ENCODE measurements at regions of chr2 and their contacts with region 1.

Region 1: GRCh38 chr2:190648289-190649034 is 421 bp upstream of the NAB1 start:
- DNase-seq: peak; percentile 94 to 96
- ATAC-seq: peak; percentile 94
- H3K4me3 ChIP-seq: peak overlapping the region; percentile 67 to 73
- H3K27ac ChIP-seq: peak overlapping the region; percentile 52 to 85
- H3K4me1 ChIP-seq: peaks cover 0 to under 1% of the 10 kb centered on the region in 2 donors
- H3K27me3 ChIP-seq: no peaks in the 10 kb centered on the region

Region 2: GRCh38 chr2:190534310-190535120 is 113.9 kb before region 1 on chr2 and contains the start of gene NEMP2:
- intact Hi-C with region 1: loop called in 1 of 2 experiments (anchors 2 kb)
- DNase-seq: peak; percentile 84 to 92
- ATAC-seq: peak; percentile 91
- H3K4me3 ChIP-seq: peak within 1 kb of the TSS; percentile 7 to 78
- H3K27ac ChIP-seq: peak within 1 kb of the TSS; percentile 23 to 55
- H3K4me1 ChIP-seq: peaks cover 0 to 3% of the 10 kb centered on the region in 2 donors
- H3K27me3 ChIP-seq: no peaks in the 10 kb centered on the region
- total RNA-seq, gene NEMP2: 8.0 to 8.6 TPM

Region 3: DNA sequence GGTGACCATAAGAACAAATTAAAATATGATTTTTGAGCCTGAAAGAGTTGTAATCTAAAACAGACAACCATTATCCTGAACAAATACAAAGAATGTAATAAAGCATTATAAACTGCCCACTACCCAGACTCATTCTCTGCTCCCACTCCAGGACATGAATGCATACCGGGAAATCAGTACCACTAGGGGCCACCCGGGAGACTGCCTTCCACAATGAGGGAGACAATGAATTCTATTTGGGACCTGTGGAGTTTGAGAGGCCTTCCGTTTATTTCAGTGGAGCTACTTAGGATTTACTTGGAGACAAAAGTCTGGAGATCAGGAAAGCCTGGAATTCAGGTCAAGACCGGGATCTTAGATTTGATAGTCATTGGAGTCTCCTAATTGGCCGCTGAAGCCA is 50.4 kb after region 1 on chr2:
- intact Hi-C with region 1: no loop called
- DNase-seq: no peak
- ATAC-seq: no peak
- H3K4me3 ChIP-seq: no peak overlapping the region
- H3K27ac ChIP-seq: no peak overlapping the region
- H3K4me1 ChIP-seq: no peaks in the 10 kb centered on the region
- H3K27me3 ChIP-seq: no peaks in the 10 kb centered on the region

Region 4: DNA sequence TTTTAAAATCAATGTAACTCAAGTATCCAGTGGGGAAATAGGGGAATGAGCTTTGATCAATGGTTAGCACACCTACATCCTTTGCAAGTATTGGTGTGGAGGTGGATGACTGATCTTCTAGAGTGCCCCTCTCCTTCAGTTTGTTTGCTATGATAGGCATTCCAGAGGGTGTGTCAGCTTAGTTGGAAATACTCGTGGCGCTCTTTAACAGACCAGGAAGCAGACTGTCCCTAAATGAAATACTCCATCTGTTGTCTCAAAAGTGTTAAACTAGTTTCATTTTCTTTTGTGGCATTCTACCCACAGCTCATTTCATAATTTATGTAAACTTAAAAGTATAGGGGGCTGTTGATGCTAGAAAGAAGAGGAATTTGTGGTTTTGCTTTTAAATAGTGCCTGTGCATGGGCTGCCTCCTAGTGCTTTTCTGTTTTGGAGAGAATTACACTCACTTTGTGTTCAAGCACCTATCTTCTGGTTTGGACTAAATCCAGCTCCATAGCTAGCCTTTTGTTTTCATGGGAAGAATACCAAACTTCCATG is 299.3 kb after region 1 on chr2:
- intact Hi-C with region 1: no loop called
- DNase-seq: no peak
- ATAC-seq: peak; percentile 44
- H3K4me3 ChIP-seq: no peak overlapping the region
- H3K27ac ChIP-seq: peak overlapping the region in 1 of 2 donors; percentile 25
- H3K4me1 ChIP-seq: peaks cover 6 to 7% of the 10 kb centered on the region in 2 donors
- H3K27me3 ChIP-seq: no peaks in the 10 kb centered on the region